ENCODE measurements at regions of chr10 and their contacts with region 1.

Region 1: GRCh38 chr10:17348501-17349349 is 105.7 kb downstream of the ST8SIA6 start:
- DNase-seq: peak; percentile 95
- H3K4me3 ChIP-seq: peak overlapping the region in 2 of 3 experiments; percentile 14 to 21
- H3K27ac ChIP-seq: peak overlapping the region; percentile 64
- H3K4me1 ChIP-seq: peaks cover 26% of the 10 kb centered on the region
- H3K27me3 ChIP-seq: no peaks in the 10 kb centered on the region
- CTCF ChIP-seq: no peak

Region 2: GRCh38 chr10:17387861-17388508 is 39.3 kb after region 1 on chr10:
- CTCF ChIA-PET with region 1: no interaction called
- dilution Hi-C with region 1: loop called (anchors 5 kb)
- in situ Hi-C with region 1: no loop called
- intact Hi-C with region 1: no loop called
- DNase-seq: peak; percentile 67
- H3K4me3 ChIP-seq: no peak overlapping the region
- H3K27ac ChIP-seq: no peak overlapping the region
- H3K4me1 ChIP-seq: peaks cover 11% of the 10 kb centered on the region
- H3K27me3 ChIP-seq: no peaks in the 10 kb centered on the region
- CTCF ChIP-seq: no peak

Measured in mammary epithelial cell (primary cell).